OCI-LY7 (cell line): ENCODE measurements at regions of chr19 and their contacts with region 1.

Region 1: GRCh38 chr19:48398375-48399235 is 5.1 kb downstream of the GRIN2D start:
- DNase-seq: peak; percentile 95
- H3K4me3 ChIP-seq: peak overlapping the region; percentile 62
- H3K27ac ChIP-seq: no peak overlapping the region
- H3K4me1 ChIP-seq: peaks cover 40% of the 10 kb centered on the region
- CTCF ChIP-seq: no peak

Region 2: DNA sequence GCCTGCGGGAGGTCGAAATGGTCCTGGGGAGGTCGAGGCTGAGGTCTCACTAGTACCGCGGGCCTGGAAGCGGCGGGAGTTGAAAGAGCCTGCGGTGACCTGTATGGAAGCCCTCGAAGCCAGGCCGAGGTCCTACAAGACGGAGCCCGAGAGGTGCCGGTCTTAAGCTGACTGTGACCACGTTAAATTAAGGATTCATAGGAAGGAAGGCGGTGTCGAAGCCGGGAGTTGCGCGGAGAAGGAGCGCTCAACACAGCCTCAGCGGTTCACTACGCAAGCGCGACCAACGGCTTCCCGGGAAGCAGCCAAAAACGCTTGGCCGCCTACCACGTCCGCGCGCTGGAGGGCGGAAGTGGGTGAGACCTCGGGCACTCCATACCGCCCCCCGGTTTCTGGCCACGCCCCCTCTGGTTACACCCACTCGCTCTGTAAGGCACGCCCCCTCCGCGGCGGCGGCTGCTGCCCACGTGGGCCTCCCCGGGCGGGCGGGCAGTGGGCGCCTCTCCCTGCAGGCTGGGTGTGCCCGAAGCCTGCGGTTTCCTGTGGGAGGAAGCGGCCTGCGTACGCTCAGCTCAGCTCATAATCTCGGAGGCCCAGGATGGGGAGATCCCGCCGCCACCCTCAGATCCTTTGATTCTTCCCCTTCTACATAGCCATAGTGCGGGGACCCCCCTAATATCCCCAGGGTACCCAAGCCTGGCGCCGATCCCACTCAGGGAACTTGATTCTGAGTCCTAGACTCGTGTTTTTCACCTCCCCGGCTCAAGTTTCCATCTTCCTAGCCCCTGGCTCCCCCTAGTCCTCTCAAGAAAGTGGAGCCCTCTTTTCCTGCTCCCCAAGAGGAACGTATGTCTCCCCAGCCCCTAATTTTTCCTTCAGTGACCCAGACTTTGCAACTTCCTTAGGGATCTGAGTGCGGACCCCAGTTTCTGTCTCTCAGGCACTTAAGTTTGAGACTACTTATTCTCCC is 76.7 kb before region 1 on chr19:
- CTCF ChIA-PET with region 1: no interaction called
- POLR2A ChIA-PET with region 1: no interaction called
- intact Hi-C with region 1: loop called (anchors 2 kb)
- DNase-seq: peak; percentile 98
- H3K4me3 ChIP-seq: peak overlapping the region; percentile 70
- H3K27ac ChIP-seq: peak overlapping the region; percentile 90
- H3K4me1 ChIP-seq: peaks cover 44% of the 10 kb centered on the region
- CTCF ChIP-seq: no peak

Region 3: GRCh38 chr19:48461982-48462655 is 63.5 kb after region 1 on chr19:
- CTCF ChIA-PET with region 1: no interaction called
- POLR2A ChIA-PET with region 1: no interaction called
- intact Hi-C with region 1: no loop called
- DNase-seq: peak; percentile 35
- H3K4me3 ChIP-seq: no peak overlapping the region
- H3K27ac ChIP-seq: no peak overlapping the region
- H3K4me1 ChIP-seq: no peaks in the 10 kb centered on the region
- CTCF ChIP-seq: no peak

Region 4: DNA sequence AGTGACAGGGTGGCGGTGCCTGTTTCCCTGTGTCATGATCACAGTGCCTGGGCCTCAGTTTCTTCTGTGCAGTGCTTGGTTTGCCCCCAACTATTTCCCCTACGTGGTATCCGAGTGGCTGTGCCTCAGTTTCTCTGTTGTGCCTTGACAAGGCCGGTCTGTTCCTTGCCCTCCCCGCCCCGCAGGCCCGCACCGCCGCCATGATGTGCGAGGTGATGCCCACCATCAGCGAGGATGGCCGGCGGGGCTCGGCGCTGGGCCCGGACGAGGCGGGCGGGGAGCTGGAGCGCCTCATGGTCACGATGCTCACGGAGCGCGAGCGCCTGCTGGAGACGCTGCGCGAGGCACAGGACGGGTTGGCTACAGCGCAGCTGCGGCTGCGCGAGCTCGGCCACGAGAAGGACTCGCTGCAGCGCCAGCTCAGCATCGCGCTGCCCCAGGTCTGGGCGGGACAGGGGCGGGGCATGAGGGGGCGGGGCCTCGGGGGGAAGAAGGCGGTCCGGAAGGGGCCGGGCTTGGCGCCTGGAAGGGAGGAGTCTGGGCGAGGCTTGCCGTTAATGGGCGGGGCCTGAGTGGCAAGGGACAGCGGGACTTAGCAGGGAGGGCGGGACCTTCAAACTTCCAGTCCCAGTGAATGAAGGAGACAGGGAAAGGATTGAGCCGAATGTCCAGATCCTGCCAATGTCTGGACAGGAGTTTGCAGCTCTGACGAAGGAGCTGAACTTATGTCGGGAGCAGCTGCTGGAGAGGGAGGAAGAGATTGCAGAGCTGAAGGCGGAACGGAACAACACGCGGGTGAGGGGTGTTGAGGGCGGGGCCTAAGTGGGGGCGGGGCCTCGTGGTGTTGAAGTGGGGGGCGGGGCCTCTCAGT is 729.3 kb after region 1 on chr19:
- CTCF ChIA-PET with region 1: interaction called, 10 read pairs
- POLR2A ChIA-PET with region 1: no interaction called
- intact Hi-C with region 1: no loop called
- DNase-seq: peak; percentile 96
- H3K4me3 ChIP-seq: peak overlapping the region; percentile 67
- H3K27ac ChIP-seq: no peak overlapping the region
- H3K4me1 ChIP-seq: peaks cover 16% of the 10 kb centered on the region
- CTCF ChIP-seq: no peak